ENCODE measurements at regions of chr19 and their contacts with region 1.

Region 1: GRCh38 chr19:3759482-3760254 is 1.8 kb downstream of the APBA3 start:
- DNase-seq: peak in 1 of 5 donors; percentile 46
- H3K4me3 ChIP-seq: no peak overlapping the region
- H3K27ac ChIP-seq: no peak overlapping the region
- H3K4me1 ChIP-seq: peaks cover 3% of the 10 kb centered on the region
- H3K27me3 ChIP-seq: no peaks in the 10 kb centered on the region
- CTCF ChIP-seq: no peak
- EP300 ChIP-seq: no peak
- POLR2A ChIP-seq: no peak

Region 2: GRCh38 chr19:3670796-3671679 is 88.6 kb before region 1 on chr19:
- intact Hi-C with region 1: loop called in 1 of 4 experiments (anchors 5 kb)
- DNase-seq: peak; percentile 88 to 94 (median 90)
- H3K4me3 ChIP-seq: peak overlapping the region; percentile 37
- H3K27ac ChIP-seq: peak overlapping the region; percentile 90 to 99
- H3K4me1 ChIP-seq: peaks cover 16% of the 10 kb centered on the region
- H3K27me3 ChIP-seq: no peaks in the 10 kb centered on the region
- CTCF ChIP-seq: no peak
- EP300 ChIP-seq: peak; percentile 39
- POLR2A ChIP-seq: peak; percentile 59

Measured in ovary (tissue), 10 donors.